ENCODE measurements at regions of chr17 and their contacts with region 1.

Region 1: GRCh38 chr17:42276359-42276608 is at the start of gene STAT5B:
- DNase-seq: peak; percentile 96
- H3K4me3 ChIP-seq: peak within 1 kb of the TSS; percentile 71 to 92
- H3K27ac ChIP-seq: peak within 1 kb of the TSS; percentile 67 to 85
- H3K4me1 ChIP-seq: peaks cover 14 to 21% of the 10 kb centered on the region in 2 experiments; a peak in 3 of 4 replicates
- H3K27me3 ChIP-seq: no peaks in the 10 kb centered on the region
- CTCF ChIP-seq: no peak
- EP300 ChIP-seq: no peak
- RAD21 ChIP-seq: no peak
- polyA plus RNA-seq, gene STAT5B: 23.6 and 27.7 TPM in 2 replicates

Region 2: DNA sequence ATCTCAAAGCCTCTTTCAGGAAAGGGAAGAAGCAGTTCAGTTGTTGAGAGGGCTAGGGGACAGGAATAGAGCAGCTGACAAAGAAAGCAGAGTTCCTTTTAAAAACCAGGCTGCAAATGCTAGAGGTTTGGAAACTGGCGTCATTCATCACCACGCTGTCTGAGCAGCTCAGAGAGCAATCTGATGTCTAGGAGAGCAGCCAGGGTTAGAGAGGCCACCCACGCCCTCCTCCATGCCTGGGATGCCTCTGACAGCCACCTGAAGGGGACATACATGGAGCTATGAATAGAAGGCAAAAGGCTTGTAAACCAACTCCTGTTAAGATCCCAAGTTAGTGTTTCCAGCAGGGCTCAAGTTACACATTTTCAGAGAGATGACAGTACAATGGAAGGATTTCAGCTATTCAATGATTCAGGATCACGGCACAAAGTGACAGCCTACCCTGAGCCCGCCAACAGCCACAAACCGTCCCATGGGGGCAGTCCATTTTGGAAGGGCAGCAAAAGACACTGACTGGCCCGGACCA is 133.8 kb before region 1 on chr17:
- CTCF ChIA-PET with region 1: no interaction called
- POLR2A ChIA-PET with region 1: no interaction called
- DNase-seq: no peak
- H3K4me3 ChIP-seq: no peak overlapping the region
- H3K27ac ChIP-seq: peak overlapping the region in 1 of 2 experiments; percentile 35; a peak in 2 of 4 replicates
- H3K4me1 ChIP-seq: peaks cover 6 to 15% of the 10 kb centered on the region in 2 experiments; a peak in 2 of 4 replicates
- H3K27me3 ChIP-seq: no peaks in the 10 kb centered on the region
- CTCF ChIP-seq: no peak
- EP300 ChIP-seq: no peak
- RAD21 ChIP-seq: no peak

Region 3: DNA sequence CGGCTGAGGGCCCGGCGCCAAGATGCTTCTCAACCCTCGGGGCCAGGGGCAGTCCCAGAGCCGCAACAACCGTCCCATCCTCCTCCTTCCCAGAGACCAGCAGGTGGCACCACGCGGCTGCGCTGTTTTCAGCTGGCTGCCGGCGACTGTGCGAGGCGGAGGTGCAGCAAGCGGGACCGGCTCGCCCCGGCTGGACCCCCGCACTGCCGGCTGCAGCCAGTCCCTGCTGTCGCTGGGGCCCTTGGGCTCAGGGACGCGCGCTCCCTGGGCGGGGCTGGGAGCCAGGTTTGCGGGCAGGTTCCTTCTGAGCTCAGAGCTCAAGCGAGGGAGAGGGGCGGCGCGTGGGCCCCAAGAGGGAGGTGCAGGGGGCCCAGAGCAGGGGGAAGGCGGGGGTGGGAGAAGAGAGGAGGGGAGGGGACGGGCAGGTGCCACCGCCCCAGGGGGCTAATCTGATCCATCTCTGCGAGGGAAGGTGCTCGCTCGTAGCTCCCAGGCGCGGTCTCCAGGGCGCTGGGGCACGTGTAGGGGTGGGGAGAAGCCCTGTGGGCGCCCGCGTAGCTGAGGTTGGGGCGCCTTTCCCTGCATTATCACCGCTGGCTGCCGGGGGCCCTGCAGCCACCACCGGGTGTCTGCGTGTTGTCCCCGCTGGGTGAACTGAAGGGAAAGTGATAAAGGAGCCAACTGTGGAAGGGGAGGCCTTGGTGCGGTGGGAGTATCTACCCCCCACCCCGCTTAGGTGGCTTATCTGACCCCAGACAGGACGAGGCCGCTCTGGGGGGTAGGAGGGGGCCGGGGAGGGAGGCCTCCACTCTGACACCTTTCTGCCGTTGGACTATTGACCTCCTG is 36.2 kb after region 1 on chr17:
- CTCF ChIA-PET with region 1: interaction called, 13 read pairs
- POLR2A ChIA-PET with region 1: interaction called, 4 read pairs
- DNase-seq: peak; percentile 93
- H3K4me3 ChIP-seq: no peak overlapping the region; a peak in 1 of 4 replicates
- H3K27ac ChIP-seq: peak overlapping the region in 1 of 2 experiments; percentile 51; a peak in 2 of 4 replicates
- H3K4me1 ChIP-seq: peaks cover 0 to 15% of the 10 kb centered on the region in 2 experiments; a peak in 2 of 4 replicates
- H3K27me3 ChIP-seq: no peaks in the 10 kb centered on the region
- CTCF ChIP-seq: peak; percentile 65
- EP300 ChIP-seq: peak in 1 of 2 experiments; percentile 2; a peak in 1 of 4 replicates
- RAD21 ChIP-seq: peak; percentile 70

Measured in SK-N-SH (cell line).